Pancreas (tissue), 10 donors: ENCODE measurements at regions of chr11 and their contacts with region 1.

Region 1: DNA sequence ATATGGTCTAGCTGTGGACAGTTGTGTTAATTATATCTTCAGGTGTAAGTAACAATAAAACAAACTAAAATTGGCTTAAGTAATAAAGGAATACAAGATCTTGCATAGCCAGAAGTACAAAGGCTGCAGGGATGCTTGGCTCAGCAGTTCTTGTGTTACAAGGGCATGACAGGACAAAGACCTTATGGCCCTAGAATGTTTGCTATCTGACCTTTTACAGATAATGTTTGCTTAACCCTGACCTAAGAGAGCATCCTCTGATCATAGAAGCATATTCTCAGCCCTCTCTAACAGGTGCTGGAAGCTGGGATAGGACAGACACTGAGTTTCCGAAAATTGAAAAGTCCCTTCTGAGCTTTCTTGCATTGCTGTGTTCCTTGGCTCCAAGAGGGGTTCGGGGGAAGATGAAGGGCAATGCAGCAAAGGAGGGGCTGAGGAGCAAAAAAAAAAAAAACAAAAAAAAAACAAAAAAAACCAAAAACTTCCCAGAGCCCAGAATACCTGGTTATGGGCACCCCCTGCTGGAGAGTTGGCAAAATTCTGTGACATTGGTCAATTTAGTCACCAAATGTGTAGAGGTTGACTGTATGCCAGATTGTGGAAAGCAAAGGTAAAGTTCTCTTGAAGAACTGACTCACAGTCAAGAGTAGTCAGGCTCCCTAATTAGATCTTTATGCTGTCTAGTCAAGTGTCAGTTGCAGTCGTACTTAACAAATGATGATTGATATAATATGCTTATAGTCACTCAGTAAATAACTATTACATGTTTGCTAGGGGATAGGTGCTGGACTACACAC is 10.4 kb upstream of the HIKESHI start:
- DNase-seq: peak in 5 of 6 donors; percentile 21 to 63 (median 44)
- ATAC-seq: peak; percentile 81 to 94 (median 91)
- H3K4me3 ChIP-seq: no peak overlapping the region
- H3K27ac ChIP-seq: no peak overlapping the region
- H3K4me1 ChIP-seq: no peaks in the 10 kb centered on the region
- H3K27me3 ChIP-seq: no peaks in the 10 kb centered on the region
- CTCF ChIP-seq: peak; percentile 29 to 61 (median 41)

Region 2: GRCh38 chr11:85694386-85694980 is 597.2 kb before region 1 on chr11:
- intact Hi-C with region 1: loop called in 1 of 3 experiments (anchors 10 kb)
- DNase-seq: no peak
- ATAC-seq: peak in 2 of 4 donors; percentile 38 to 55
- H3K4me3 ChIP-seq: no peak overlapping the region
- H3K27ac ChIP-seq: no peak overlapping the region
- H3K4me1 ChIP-seq: no peaks in the 10 kb centered on the region
- H3K27me3 ChIP-seq: no peaks in the 10 kb centered on the region
- CTCF ChIP-seq: no peak

Region 3: DNA sequence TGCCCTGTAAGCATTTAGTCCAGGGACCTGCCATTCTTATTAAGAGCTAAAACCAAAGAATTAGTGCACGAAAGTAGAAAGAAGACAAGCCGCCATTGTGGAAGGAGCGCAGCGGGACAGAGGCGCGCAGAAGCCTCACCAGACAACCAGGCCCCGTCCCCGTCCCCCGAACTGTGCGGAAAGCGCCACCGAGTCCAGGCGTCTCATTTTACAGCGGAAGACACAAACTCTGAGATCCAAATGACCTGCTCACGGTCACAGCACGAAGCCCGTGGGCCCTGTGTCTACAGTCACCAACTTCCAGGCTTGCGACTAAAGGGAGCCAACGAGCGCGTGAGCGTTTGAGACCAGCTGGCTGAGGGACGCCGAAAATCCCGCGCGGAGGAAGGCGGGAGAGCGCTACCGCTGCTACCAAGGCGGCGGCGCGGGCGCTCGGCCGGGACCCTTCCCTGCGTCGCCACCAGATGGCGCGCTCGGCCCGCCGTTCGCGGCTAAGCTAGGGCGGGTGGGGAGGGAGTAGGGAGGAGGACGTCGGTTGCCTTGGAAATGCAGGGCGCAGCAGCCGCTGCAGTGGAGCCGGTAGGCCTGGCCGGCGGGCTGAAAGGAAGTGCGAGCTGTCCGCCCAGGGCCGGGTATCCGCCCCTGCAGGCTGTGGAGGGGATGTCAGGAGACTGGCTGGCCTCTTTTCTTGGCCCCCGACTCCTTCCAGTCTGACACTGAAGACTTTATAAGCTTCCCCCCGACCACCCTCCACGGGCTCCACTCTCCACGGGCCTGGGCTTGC is 436.9 kb before region 1 on chr11:
- intact Hi-C with region 1: loop called in 1 of 3 experiments (anchors 10 kb)
- DNase-seq: peak; percentile 87 to 98 (median 94)
- ATAC-seq: peak; percentile 95 to 99 (median 98)
- H3K4me3 ChIP-seq: peak overlapping the region; percentile 26 to 54 (median 41)
- H3K27ac ChIP-seq: peak overlapping the region; percentile 77 to 85 (median 84)
- H3K4me1 ChIP-seq: peaks cover 0 to 2% (median 0%) of the 10 kb centered on the region in 3 donors
- H3K27me3 ChIP-seq: no peaks in the 10 kb centered on the region
- CTCF ChIP-seq: peak; percentile 93 to 97 (median 95)

Region 4: DNA sequence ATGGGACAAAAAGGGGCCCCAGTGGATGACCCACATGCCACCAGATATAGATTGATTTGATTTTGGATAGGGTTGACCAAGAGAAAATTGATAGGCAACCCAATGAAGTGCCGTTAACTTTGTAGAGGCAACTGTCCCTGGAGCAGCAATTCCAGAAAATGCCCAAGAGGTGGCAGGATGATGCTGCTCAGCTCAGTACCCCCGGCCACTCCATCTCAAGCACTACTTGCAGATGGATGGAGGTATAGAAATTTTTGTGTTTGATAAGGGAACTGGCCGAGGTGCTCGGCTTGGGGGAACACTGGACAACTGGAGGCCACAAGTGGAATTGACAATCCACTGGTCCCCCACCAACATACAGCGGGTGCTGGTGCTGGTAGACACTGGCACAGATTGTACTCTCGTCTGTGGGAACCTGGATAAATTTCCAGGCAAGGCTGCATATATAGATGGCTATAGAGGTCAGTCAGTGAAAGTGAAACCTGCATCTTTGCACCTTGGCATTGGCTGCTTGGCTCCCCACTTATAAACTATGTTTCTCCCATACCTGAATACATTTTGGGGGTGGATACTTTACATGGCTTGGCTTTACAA is 350.2 kb before region 1 on chr11:
- intact Hi-C with region 1: loop called in 1 of 3 experiments (anchors 10 kb)
- DNase-seq: peak in 1 of 6 donors; percentile 48
- ATAC-seq: peak in 3 of 4 donors; percentile 82 to 90 (median 88)
- H3K4me3 ChIP-seq: no peak overlapping the region
- H3K27ac ChIP-seq: no peak overlapping the region
- H3K4me1 ChIP-seq: no peaks in the 10 kb centered on the region
- H3K27me3 ChIP-seq: no peaks in the 10 kb centered on the region
- CTCF ChIP-seq: peak; percentile 9 to 47 (median 39)